ENCODE measurements at regions of chr2 and their contacts with region 1.

Region 1: DNA sequence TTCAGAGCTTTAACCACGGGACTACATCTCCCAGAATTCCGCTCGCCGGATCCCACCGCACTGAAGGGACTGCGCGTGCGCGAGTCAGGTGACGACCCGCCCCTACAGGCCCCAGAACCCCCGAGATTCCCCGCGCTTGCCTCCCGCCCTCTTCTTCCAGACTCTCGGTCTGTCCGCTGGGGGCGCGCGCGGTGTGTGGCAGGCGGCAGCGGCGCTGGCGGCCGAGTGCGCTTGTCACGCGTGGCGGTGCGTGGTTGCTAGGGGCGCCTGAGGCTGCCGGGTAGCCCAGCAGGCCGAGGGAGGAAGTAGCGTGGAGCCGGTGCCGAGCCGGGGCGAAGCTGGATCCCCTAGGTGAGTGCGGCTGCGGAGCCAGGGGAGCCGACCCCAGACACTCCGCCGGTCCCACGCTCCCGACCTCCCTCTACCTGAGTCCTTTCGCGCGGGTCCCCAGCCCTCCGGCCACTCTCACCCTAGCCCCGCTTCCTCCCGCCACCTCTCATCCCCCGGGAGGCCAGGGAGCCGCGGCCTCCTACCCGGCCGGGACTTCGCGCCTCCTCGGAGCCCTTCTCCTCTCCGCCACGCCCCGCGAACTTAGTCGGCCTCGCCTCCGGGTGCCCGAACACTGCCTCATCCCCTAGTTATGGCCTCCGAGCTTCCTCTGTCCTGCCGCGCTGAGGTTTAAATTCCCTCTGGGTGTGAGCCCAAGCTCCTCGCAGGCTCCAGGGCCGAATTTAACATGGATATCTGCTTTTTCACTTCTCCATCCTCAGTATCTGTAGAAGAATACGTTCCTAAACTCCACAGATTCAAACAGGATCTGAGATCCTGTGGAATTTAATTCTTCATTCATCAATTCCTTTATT is at the start of gene TTLL4:
- DNase-seq: peak; percentile 64
- H3K4me3 ChIP-seq: peak within 1 kb of the TSS; percentile 68
- H3K27me3 ChIP-seq: no peaks in the 10 kb centered on the region
- CTCF ChIP-seq: peak; percentile 78
- polyA plus RNA-seq, gene TTLL4: 12.9 and 14.1 TPM in 2 replicates

Region 2: GRCh38 chr2:217370391-217370790 is 1340.5 kb before region 1 on chr2:
- CTCF ChIA-PET with region 1: no interaction called
- POLR2A ChIA-PET with region 1: no interaction called
- DNase-seq: peak; percentile 62
- H3K4me3 ChIP-seq: no peak overlapping the region
- H3K27me3 ChIP-seq: no peaks in the 10 kb centered on the region
- CTCF ChIP-seq: no peak

Region 3: DNA sequence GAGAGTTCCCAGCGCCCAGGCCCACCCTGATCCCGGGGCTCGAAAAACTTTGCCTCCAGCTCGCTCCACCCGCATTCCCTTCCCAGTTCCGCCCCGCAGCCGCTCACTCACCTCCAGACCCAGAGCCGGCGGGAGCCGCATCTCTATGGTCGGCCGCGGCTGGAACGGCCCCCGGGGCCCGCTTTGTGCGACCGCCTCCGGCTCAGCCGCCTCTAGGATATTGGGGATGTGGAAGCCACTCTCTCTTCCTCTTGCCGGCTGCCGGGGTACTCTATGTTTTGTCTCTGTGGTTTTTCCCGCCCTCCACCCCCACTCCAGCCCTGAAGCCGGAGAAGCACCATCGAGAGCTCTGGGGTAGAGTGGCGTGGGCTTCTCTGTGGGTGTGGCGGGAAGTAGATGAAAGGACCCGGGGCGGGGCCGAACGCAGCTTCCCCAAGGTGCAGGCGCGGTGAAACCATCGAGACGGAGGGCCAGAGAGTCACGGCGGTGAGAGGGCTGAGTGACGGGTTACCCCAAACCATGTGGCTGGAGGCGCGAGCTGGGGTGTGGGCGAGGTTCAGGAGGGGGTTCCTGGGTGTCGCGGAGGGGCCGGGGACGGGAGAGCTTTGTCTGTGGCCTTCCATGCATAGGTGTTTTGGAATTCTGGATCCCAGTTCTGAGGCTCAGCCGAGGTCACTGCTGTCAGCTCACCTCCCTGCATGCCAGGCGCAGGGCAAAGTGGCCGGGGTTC is 51.5 kb before region 1 on chr2 and contains the starts of genes BCS1L and ZNF142:
- CTCF ChIA-PET with region 1: interaction called, 20 read pairs
- POLR2A ChIA-PET with region 1: interaction called, 5 read pairs
- DNase-seq: peak; percentile 45
- H3K4me3 ChIP-seq: peak within 1 kb of the TSS; percentile 89
- H3K27me3 ChIP-seq: no peaks in the 10 kb centered on the region
- CTCF ChIP-seq: no peak
- polyA plus RNA-seq, gene BCS1L: 34.1 and 49.0 TPM in 2 replicates
- polyA plus RNA-seq, gene ZNF142: 2.9 and 7.1 TPM in 2 replicates

Region 4: GRCh38 chr2:218727502-218728165 is 16.7 kb after region 1 on chr2:
- CTCF ChIA-PET with region 1: interaction called, 17 read pairs
- POLR2A ChIA-PET with region 1: interaction called, 4 read pairs
- DNase-seq: no peak
- H3K4me3 ChIP-seq: no peak overlapping the region
- H3K27me3 ChIP-seq: no peaks in the 10 kb centered on the region
- CTCF ChIP-seq: peak; percentile 31

Region 5: GRCh38 chr2:218733171-218734021 is 22.5 kb after region 1 on chr2:
- CTCF ChIA-PET with region 1: interaction called, 13 read pairs
- POLR2A ChIA-PET with region 1: interaction called, 4 read pairs
- DNase-seq: no peak
- H3K4me3 ChIP-seq: no peak overlapping the region
- H3K27me3 ChIP-seq: no peaks in the 10 kb centered on the region
- CTCF ChIP-seq: no peak

Region 6: GRCh38 chr2:218819093-218819492 is 108.2 kb after region 1 on chr2:
- CTCF ChIA-PET with region 1: no interaction called
- POLR2A ChIA-PET with region 1: no interaction called
- DNase-seq: no peak
- H3K4me3 ChIP-seq: no peak overlapping the region
- H3K27me3 ChIP-seq: no peaks in the 10 kb centered on the region
- CTCF ChIP-seq: no peak

Region 7: DNA sequence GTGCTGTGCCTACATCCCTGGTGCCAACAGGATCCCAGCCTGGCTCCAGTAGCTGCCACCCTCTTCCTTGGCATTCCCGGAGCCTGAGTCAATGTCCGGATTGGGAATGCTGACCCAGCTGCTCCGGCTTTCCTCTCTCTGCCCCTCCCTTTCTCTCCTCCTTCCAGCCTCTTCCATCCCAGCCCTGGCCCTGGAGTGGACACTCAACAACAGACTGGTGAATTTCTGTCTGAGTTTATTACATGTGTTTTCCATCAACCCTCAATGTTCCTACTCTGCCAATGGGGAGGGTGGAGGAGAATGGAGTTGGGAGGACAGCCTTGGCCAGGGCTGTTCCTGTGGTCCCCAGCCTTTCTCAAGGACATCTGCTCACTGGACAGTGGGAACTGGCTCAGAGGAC is 121.6 kb after region 1 on chr2:
- CTCF ChIA-PET with region 1: interaction called, 12 read pairs
- POLR2A ChIA-PET with region 1: no interaction called
- DNase-seq: no peak
- H3K4me3 ChIP-seq: no peak overlapping the region
- H3K27me3 ChIP-seq: peaks cover 2% of the 10 kb centered on the region
- CTCF ChIP-seq: no peak

Region 8: GRCh38 chr2:218898109-218898878 is 187.4 kb after region 1 on chr2:
- CTCF ChIA-PET with region 1: no interaction called
- POLR2A ChIA-PET with region 1: no interaction called
- DNase-seq: no peak
- H3K4me3 ChIP-seq: no peak overlapping the region
- H3K27me3 ChIP-seq: peaks cover 35% of the 10 kb centered on the region
- CTCF ChIP-seq: peak; percentile 98

Region 9: GRCh38 chr2:218975060-218975777 is 264.3 kb after region 1 on chr2:
- CTCF ChIA-PET with region 1: no interaction called
- POLR2A ChIA-PET with region 1: no interaction called
- DNase-seq: no peak
- H3K4me3 ChIP-seq: no peak overlapping the region
- H3K27me3 ChIP-seq: peaks cover 23% of the 10 kb centered on the region
- CTCF ChIP-seq: no peak

Measured in BJ (cell line).